ENCODE measurements at regions of chr19 and their contacts with region 1.

Region 1: GRCh38 chr19:29665215-29665825 is at the start of gene PLEKHF1:
- DNase-seq: no peak
- ATAC-seq: peak; percentile 94
- H3K4me3 ChIP-seq: peak within 1 kb of the TSS; percentile 92
- H3K27ac ChIP-seq: peak within 1 kb of the TSS; percentile 84
- H3K4me1 ChIP-seq: peaks cover 33% of the 10 kb centered on the region
- H3K27me3 ChIP-seq: no peaks in the 10 kb centered on the region
- CTCF ChIP-seq: peak in 1 of 3 experiments; percentile 51; a peak in 2 of 6 replicates
- EP300 ChIP-seq: no peak
- POLR2A ChIP-seq: peak; percentile 73
- RAD21 ChIP-seq: peak; percentile 51; the same call in 1 of the 2 replicates
- polyA plus RNA-seq, gene PLEKHF1: 0.10 to 0.31 TPM

Region 2: DNA sequence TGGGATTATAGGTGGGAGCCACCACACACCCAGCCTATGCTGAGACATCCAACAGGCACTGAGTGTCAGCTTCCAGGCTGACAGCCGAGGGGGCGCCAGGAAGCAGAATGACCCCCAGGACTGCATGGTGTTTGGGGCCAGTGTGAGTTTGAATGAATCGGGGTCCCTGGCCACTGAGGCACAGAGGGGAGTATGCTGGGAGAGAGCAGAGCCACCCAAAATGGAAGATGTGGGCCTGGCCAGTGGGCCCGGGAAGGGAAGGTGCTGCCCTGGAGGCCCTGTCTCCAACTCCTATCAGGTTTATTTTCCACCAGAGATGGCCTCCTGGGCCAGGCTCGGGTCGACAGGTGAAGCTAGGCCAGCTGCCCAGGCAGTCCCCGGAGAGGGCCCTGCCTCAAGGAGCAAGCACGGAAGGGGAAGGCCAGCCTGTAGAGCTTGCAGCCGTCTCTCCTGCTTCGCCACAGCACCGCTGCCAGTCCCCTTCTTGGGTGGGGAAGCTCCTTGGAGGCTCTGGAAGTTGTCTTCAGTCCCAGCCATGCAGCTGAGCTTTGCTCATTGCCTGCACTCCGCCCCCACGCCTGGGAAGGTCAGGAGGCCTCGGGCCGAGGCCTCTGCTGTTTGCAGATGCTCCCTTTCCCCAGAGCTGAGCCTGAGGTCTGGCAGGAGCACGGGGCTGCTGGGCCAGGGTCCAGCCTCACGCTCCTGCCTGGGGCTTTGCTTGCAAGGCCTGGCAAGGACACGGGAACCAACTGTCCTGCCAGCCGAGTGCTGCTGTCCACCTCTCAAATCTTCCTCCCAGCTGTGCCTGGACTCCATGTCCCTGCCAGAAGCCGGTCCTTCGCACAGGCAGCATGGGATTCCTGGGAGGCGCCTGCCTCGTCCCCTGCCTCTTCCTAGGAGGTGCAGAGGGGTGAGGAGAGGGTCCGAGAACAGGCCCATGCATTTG is 13.1 kb after region 1 on chr19:
- CTCF ChIA-PET with region 1: interaction called, 5 read pairs
- POLR2A ChIA-PET with region 1: interaction called, 3 read pairs
- RAD21 ChIA-PET with region 1: interaction called, 5 read pairs
- SMC1A ChIA-PET with region 1: interaction called, 12 read pairs
- in situ Hi-C with region 1: no loop called
- intact Hi-C with region 1: no loop called
- DNase-seq: no peak
- ATAC-seq: no peak
- H3K4me3 ChIP-seq: no peak overlapping the region
- H3K27ac ChIP-seq: peak overlapping the region; percentile 42
- H3K4me1 ChIP-seq: peaks cover 30% of the 10 kb centered on the region
- H3K27me3 ChIP-seq: no peaks in the 10 kb centered on the region
- CTCF ChIP-seq: no peak
- EP300 ChIP-seq: no peak
- POLR2A ChIP-seq: no peak
- RAD21 ChIP-seq: no peak

Region 3: GRCh38 chr19:29694669-29695627 is 29.6 kb after region 1 on chr19:
- CTCF ChIA-PET with region 1: interaction called, 26 read pairs
- POLR2A ChIA-PET with region 1: no interaction called
- RAD21 ChIA-PET with region 1: no interaction called
- SMC1A ChIA-PET with region 1: interaction called, 4 read pairs
- in situ Hi-C with region 1: no loop called
- intact Hi-C with region 1: loop called (anchors 2 kb)
- DNase-seq: no peak
- ATAC-seq: peak; percentile 100
- H3K4me3 ChIP-seq: no peak overlapping the region
- H3K27ac ChIP-seq: no peak overlapping the region
- H3K4me1 ChIP-seq: no peaks in the 10 kb centered on the region; the same call in 1 of the 2 replicates
- H3K27me3 ChIP-seq: no peaks in the 10 kb centered on the region
- CTCF ChIP-seq: peak; percentile 85 to 96 (median 95); a peak in 5 of 6 replicates
- EP300 ChIP-seq: no peak
- POLR2A ChIP-seq: no peak
- RAD21 ChIP-seq: peak; percentile 76